ENCODE measurements at regions of chrX and their contacts with region 1.

Region 1: GRCh38 chrX:109911046-109911445 is 91.9 kb upstream of the TMEM164 start:
- DNase-seq: no peak

Region 2: GRCh38 chrX:110086916-110087484 is 176.0 kb after region 1 on chrX:
- intact Hi-C with region 1: no loop called
- DNase-seq: no peak

Region 3: GRCh38 chrX:110146521-110146920 is 235.5 kb after region 1 on chrX:
- intact Hi-C with region 1: loop called (anchors 5 kb)
- DNase-seq: peak in 1 of 10 donors; percentile 15

Measured in posterior cingulate gyrus (tissue), 11 donors.